ENCODE measurements at regions of chr17 and their contacts with region 1.

Region 1: DNA sequence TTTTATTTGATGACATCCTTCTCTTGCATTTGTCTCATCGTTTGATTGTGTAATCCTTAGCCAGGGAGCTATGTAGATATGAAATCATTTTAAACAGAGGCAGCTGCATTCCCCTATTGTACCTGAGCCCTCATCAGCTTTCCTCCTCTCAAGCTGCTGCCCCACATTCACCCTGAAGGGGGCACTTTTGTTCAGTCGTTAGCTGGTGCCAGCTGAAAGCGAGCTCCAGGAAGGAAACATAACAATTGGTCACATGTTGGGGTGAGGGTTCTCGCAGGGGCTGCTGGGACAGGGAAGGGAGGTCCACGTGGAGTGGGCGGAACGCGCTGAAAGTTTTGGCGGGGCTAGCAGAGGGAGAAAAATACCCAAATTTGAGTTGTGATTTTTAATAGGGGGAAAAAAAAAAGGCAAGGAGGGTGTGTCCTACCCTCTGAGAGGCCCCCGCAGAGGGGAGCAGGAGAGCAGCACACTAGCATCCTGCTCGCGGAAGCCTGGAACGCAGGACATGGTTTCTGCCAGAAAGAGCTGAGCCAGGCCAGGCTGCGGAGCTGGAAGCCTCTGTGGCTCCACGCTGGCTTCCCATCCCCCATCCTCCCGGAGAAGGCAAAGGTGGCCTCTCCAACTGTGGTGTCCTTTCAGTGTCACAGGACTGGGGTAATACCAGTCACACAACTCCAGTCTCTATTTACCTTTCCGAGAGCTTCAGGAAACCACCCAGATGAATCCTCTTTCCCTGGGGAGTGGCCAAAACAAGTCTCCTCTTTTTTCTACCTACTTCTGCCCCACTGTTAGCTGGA is 8.5 kb upstream of the MSL1 start:
- DNase-seq: peak; percentile 97
- H3K4me3 ChIP-seq: peak overlapping the region; percentile 13 to 55 (median 25)
- H3K27ac ChIP-seq: peak overlapping the region; percentile 93 to 99 (median 96)
- H3K4me1 ChIP-seq: peaks cover 55 to 73% (median 64%) of the 10 kb centered on the region in 4 donors
- H3K27me3 ChIP-seq: no peaks in the 10 kb centered on the region
- CTCF ChIP-seq: peak; percentile 80 to 98 (median 83)
- EP300 ChIP-seq: no peak
- POLR2A ChIP-seq: peak; percentile 66

Region 2: GRCh38 chr17:39980351-39981206 is 132.7 kb before region 1 on chr17 and contains the start of gene PSMD3:
- in situ Hi-C with region 1: no loop called
- intact Hi-C with region 1: no loop called
- DNase-seq: peak; percentile 99
- H3K4me3 ChIP-seq: peak within 1 kb of the TSS; percentile 87 to 99 (median 92)
- H3K27ac ChIP-seq: peak within 1 kb of the TSS; percentile 94 to 99 (median 98)
- H3K4me1 ChIP-seq: peaks cover 17 to 28% (median 20%) of the 10 kb centered on the region in 4 donors
- H3K27me3 ChIP-seq: peaks cover 6% of the 10 kb centered on the region
- CTCF ChIP-seq: peak; percentile 65 to 98 (median 76)
- EP300 ChIP-seq: no peak
- POLR2A ChIP-seq: peak; percentile 93
- total RNA-seq, gene PSMD3: 80.7 to 117 (median 112) TPM

Region 3: DNA sequence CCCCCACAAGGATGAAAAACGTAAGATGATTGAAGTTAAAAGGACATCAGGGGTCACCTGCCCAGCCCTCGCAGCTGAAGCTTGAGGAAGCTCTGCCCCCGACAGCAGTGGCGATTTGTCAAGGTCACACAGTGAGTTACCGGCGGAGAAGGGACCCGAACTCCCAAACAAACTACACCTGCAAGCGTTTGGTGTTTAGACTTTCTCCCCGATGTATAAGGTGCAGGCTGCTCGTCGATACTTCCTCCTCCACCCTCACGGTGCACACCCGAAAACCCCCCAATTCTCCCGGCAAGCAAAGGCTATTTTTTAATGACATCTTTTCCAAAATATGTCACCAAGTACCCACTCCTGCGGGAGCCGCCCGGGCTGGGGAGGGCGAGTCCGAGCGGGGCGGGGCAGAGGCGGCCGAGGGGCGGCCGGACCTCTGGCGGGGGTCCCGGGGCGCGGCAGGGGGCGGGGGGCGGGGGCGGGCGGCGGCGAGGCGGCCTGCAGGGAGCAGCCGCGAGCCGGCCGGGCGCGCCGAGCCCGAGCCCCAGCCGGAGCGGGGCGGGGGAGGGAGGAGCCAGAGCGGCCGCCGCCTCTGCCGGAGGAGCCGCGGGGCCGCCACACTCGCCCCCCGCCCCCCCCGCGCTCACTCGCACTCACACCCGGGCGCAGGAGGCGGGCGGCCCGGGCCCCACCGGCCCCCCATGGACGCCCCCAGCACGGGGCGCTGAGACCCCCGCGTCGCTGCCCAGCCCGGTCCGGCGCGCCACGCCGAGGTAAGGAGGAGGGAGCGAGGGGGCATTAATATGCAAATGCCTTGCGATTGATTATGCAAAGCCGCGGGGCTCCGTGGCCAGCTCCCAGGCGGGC is 50.8 kb before region 1 on chr17 and contains the start of gene THRA:
- in situ Hi-C with region 1: loop called in 1 of 4 experiments (anchors 10 kb)
- intact Hi-C with region 1: loop called (anchors 5 kb)
- DNase-seq: peak; percentile 82
- H3K4me3 ChIP-seq: peak within 1 kb of the TSS; percentile 74 to 99 (median 90)
- H3K27ac ChIP-seq: peak within 1 kb of the TSS; percentile 94 to 98 (median 96)
- H3K4me1 ChIP-seq: peaks cover 35 to 58% (median 40%) of the 10 kb centered on the region in 4 donors
- H3K27me3 ChIP-seq: no peaks in the 10 kb centered on the region
- CTCF ChIP-seq: peak in 2 of 5 experiments; percentile 25 to 27
- EP300 ChIP-seq: no peak
- POLR2A ChIP-seq: no peak
- total RNA-seq, gene THRA: 32.6 to 82.6 (median 58.6) TPM

Region 4: GRCh38 chr17:40069751-40070708 is 43.3 kb before region 1 on chr17:
- in situ Hi-C with region 1: loop called in 1 of 4 experiments (anchors 10 kb)
- intact Hi-C with region 1: loop called (anchors 5 kb)
- DNase-seq: peak; percentile 75
- H3K4me3 ChIP-seq: peak overlapping the region in 2 of 4 donors; percentile 25 to 36
- H3K27ac ChIP-seq: peak overlapping the region; percentile 90 to 98 (median 96)
- H3K4me1 ChIP-seq: peaks cover 84 to 98% (median 92%) of the 10 kb centered on the region in 4 donors
- H3K27me3 ChIP-seq: no peaks in the 10 kb centered on the region
- CTCF ChIP-seq: peak; percentile 3 to 55 (median 39)
- EP300 ChIP-seq: no peak
- POLR2A ChIP-seq: peak; percentile 58